ENCODE measurements at regions of chr15 and their contacts with region 1.

Region 1: GRCh38 chr15:70762469-70763119 is 764 bp downstream of the UACA start:
- DNase-seq: no peak
- H3K4me3 ChIP-seq: peak overlapping the region; percentile 77
- CTCF ChIP-seq: no peak

Region 2: DNA sequence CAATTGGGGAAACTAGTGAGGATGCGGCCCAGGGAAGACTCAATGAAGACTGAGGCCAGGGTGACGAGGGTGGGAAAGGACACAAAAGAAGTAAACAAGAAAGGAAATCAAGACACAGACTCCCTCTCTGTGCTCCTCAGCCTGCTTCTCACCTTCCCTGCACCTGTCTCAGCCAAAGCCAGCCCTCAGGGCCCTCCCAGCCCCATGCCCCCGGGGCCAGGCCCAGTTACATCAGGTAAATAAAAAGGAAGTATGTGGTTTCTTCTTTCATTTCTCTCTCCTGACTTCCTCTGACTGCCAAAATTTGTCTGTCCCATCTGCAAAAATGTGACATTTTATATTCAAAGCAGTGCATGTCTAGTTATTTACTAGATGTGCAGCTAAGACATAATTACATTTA is 327.2 kb before region 1 on chr15:
- CTCF ChIA-PET with region 1: no interaction called
- POLR2A ChIA-PET with region 1: no interaction called
- DNase-seq: no peak
- H3K4me3 ChIP-seq: no peak overlapping the region
- CTCF ChIP-seq: no peak

Region 3: GRCh38 chr15:70748281-70748747 is 14.3 kb before region 1 on chr15:
- CTCF ChIA-PET with region 1: interaction called, 12 read pairs
- POLR2A ChIA-PET with region 1: interaction called, 3 read pairs
- DNase-seq: no peak
- H3K4me3 ChIP-seq: no peak overlapping the region
- CTCF ChIP-seq: no peak

Region 4: DNA sequence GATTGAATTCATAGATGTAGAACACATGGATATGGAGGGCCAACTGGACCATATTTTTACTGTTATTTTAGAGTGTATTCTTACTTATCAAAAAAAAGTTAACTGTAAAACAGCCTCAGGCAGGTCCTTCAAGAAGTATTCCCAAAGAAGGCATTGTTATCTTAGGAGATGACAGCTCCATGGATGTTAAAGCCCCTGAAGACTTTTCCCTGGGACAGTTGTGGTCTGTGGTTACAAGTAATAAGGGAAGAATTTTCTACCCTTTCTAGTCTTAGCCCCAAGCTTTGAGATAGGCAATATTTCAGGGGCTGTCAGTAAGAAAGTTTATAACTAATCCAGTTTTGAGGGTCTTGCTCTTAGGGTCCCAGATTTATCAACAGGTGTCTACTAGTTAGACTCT is 192.6 kb after region 1 on chr15:
- CTCF ChIA-PET with region 1: no interaction called
- POLR2A ChIA-PET with region 1: no interaction called
- DNase-seq: no peak
- H3K4me3 ChIP-seq: no peak overlapping the region
- CTCF ChIP-seq: no peak

Measured in AG04449 (cell line).